IMR-90 (cell line): ENCODE measurements at regions of chr5 and their contacts with region 1.

Region 1: DNA sequence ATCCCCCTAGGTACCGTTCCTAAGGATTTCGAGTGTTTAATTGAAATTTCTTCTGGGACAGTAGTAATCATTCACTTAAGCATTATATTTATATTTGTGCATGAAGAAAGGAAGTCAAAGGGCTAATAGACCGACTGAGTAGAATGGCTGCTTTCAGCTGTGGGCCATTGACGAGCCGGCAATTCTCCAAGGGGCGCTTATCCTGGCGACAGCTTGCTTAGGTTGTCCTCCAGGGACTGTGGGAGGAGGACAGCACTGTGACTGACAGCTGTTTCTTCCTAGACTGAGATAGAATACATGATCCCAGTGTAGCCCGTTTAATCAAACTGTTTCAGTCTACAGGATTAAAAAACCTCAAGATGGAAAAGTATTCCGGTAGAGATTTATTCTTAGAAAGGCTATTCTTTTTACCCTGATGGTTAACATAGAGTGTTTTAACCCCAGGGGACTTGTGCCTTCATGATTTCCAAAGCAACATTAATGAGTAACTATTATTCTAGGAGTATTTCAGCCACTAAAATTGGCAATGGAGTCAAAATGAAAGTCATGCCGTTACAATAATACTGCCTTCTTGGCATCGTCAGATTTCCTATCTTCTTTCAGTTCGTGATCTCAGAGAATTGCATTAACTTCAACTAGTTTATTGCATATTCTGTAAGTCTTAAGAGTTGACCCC is 943.1 kb upstream of the WWC1 start:
- DNase-seq: no peak
- ATAC-seq: no peak
- H3K4me3 ChIP-seq: no peak overlapping the region
- H3K27ac ChIP-seq: no peak overlapping the region
- H3K4me1 ChIP-seq: no peaks in the 10 kb centered on the region
- H3K27me3 ChIP-seq: no peaks in the 10 kb centered on the region
- CTCF ChIP-seq: no peak
- POLR2A ChIP-seq: no peak
- RAD21 ChIP-seq: no peak

Region 2: GRCh38 chr5:167071981-167072610 is 276.3 kb before region 1 on chr5:
- CTCF ChIA-PET with region 1: no interaction called
- POLR2A ChIA-PET with region 1: no interaction called
- dilution Hi-C with region 1: no loop called
- in situ Hi-C with region 1: no loop called
- intact Hi-C with region 1: no loop called
- DNase-seq: no peak
- ATAC-seq: no peak
- H3K4me3 ChIP-seq: no peak overlapping the region
- H3K27ac ChIP-seq: no peak overlapping the region
- H3K4me1 ChIP-seq: no peaks in the 10 kb centered on the region
- H3K27me3 ChIP-seq: no peaks in the 10 kb centered on the region
- CTCF ChIP-seq: no peak
- POLR2A ChIP-seq: no peak
- RAD21 ChIP-seq: no peak

Region 3: GRCh38 chr5:167332309-167332708 is 16.1 kb before region 1 on chr5:
- CTCF ChIA-PET with region 1: no interaction called
- POLR2A ChIA-PET with region 1: interaction called, 20 read pairs
- dilution Hi-C with region 1: no loop called
- in situ Hi-C with region 1: no loop called
- intact Hi-C with region 1: no loop called
- DNase-seq: no peak
- ATAC-seq: no peak
- H3K4me3 ChIP-seq: no peak overlapping the region
- H3K27ac ChIP-seq: no peak overlapping the region
- H3K4me1 ChIP-seq: no peaks in the 10 kb centered on the region
- H3K27me3 ChIP-seq: no peaks in the 10 kb centered on the region
- CTCF ChIP-seq: no peak
- POLR2A ChIP-seq: no peak
- RAD21 ChIP-seq: no peak